GM10248 (cell line): ENCODE measurements at regions of chr13 and their contacts with region 1.

Region 1: GRCh38 chr13:32427852-32428580 is at the start of gene N4BP2L1:
- DNase-seq: peak; percentile 90
- CTCF ChIP-seq: no peak

Region 2: GRCh38 chr13:32073180-32073864 is 354.7 kb before region 1 on chr13:
- CTCF ChIA-PET with region 1: no interaction called
- POLR2A ChIA-PET with region 1: no interaction called
- DNase-seq: no peak
- CTCF ChIP-seq: no peak

Region 3: DNA sequence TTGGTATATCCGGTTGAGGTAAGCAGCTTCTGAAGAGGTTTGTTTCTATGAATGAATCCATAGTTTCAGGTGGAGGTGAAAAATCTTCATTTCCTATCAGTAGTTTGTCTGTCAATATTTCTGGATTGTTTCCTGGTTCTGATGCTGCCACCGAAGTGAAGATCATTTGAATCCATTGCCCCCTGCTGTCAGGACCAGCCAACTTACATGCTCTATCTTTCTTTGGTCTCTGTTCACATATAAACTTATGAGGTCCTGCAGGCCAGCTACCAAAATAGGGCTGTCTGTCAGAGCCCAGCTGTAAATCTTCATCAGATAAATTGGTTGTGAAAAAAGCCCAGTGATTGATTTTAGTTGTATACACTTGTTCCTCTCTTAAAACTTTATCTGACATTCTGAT is 15.1 kb after region 1 on chr13:
- CTCF ChIA-PET with region 1: interaction called, 25 read pairs
- POLR2A ChIA-PET with region 1: no interaction called
- DNase-seq: peak; percentile 64
- CTCF ChIP-seq: peak; percentile 30